Heart right ventricle (tissue), 16 donors: ENCODE measurements at regions of chr4 and their contacts with region 1.

Region 1: GRCh38 chr4:159102622-159103383 is at the start of gene RAPGEF2:
- DNase-seq: peak; percentile 90 to 95
- ATAC-seq: peak; percentile 95 to 97 (median 96)
- H3K4me3 ChIP-seq: peak within 1 kb of the TSS; percentile 66 to 99 (median 99)
- H3K27ac ChIP-seq: peak within 1 kb of the TSS; percentile 95 to 98 (median 96)
- H3K4me1 ChIP-seq: peaks cover 0 to 42% (median 32%) of the 10 kb centered on the region in 9 donors
- H3K27me3 ChIP-seq: no peaks in the 10 kb centered on the region
- CTCF ChIP-seq: peak in 2 of 9 donors; percentile 5 to 15
- total RNA-seq, gene RAPGEF2: 36.1 to 68.8 (median 54.6) TPM

Region 2: GRCh38 chr4:158778156-158778711 is 324.6 kb before region 1 on chr4:
- intact Hi-C with region 1: loop called in 1 of 10 experiments (anchors 10 kb)
- DNase-seq: no peak
- ATAC-seq: peak in 1 of 8 donors; percentile 26
- H3K4me3 ChIP-seq: no peak overlapping the region
- H3K27ac ChIP-seq: peak overlapping the region in 4 of 10 donors; percentile 7 to 23 (median 14)
- H3K4me1 ChIP-seq: peaks cover 10 to 90% (median 74%) of the 10 kb centered on the region in 9 donors
- H3K27me3 ChIP-seq: no peaks in the 10 kb centered on the region
- CTCF ChIP-seq: no peak

Region 3: DNA sequence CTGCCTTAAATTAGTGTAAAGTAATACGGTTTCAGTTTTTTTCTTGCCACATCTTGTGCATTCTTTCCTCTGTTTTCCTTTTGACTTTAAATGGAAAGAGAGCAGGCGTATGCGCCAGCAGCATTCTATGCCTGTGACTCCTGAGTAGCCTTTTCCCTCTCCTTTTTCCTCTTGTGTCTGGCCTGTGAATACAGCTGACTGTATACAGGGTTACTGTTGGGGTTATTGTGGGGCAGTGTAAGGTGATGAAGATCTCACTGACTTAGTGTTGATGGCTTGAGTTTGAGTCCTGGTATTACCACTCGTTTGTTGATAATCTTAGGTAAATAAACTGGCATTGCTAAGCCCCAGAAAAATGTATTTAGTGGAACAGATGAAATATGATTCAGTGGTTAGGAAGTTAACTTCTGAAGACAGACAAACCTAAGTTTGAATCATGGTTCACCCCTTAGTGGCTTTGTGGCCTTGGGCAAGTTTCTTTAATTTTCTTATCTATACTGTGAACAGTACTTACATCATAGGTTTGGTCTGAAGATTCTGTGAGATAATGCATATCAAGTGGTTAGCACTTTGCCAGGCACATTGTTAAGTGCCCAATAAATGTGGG is 228.9 kb before region 1 on chr4:
- intact Hi-C with region 1: loop called in 2 of 10 experiments (anchors 10 kb)
- DNase-seq: no peak
- ATAC-seq: peak in 1 of 8 donors; percentile 7
- H3K4me3 ChIP-seq: no peak overlapping the region
- H3K27ac ChIP-seq: no peak overlapping the region
- H3K4me1 ChIP-seq: peaks cover 0 to 43% (median 15%) of the 10 kb centered on the region in 9 donors
- H3K27me3 ChIP-seq: no peaks in the 10 kb centered on the region
- CTCF ChIP-seq: no peak

Region 4: DNA sequence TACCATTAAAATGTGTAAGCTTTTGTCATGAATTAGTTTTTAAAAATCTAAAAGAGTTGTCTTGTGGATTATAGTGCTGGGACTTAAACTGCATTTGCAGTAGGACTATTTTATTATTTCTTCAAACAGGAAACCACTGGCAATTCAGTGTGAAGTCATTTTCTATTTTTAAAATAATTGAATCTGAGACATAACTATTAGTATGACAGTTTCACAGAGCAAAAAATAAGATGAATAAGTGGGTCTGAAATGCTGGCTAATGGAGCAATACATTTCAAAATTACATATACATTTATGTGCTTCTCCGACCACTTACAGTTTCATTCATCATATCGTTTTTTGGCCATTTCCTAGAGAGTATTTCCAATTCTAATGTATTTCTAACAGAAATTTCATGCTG is 75.3 kb before region 1 on chr4:
- intact Hi-C with region 1: loop called in 1 of 10 experiments (anchors 2 kb)
- DNase-seq: no peak
- ATAC-seq: peak in 1 of 8 donors; percentile 41
- H3K4me3 ChIP-seq: no peak overlapping the region
- H3K27ac ChIP-seq: no peak overlapping the region
- H3K4me1 ChIP-seq: peaks cover 0 to 28% (median 11%) of the 10 kb centered on the region in 9 donors
- H3K27me3 ChIP-seq: no peaks in the 10 kb centered on the region
- CTCF ChIP-seq: no peak

Region 5: DNA sequence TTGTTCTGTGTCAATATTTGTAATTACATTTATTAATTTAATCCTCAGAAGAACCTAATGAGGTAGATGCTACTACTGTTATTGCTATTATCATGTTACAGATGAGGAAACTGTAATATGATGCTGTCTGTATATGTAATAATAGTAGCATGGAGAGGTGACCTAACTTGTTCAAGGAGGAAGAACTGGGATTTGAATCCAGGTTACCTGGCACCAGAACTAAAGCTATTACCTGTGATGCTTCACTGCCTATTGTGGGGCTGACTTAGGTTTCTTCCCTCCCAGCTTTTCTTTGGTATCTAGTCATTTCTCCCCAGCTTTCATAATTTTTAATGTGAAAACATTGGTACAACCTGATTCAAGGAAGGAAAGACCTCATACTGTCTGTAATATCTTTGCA is 43.7 kb after region 1 on chr4:
- intact Hi-C with region 1: loop called in 1 of 10 experiments (anchors 5 kb)
- DNase-seq: no peak
- ATAC-seq: no peak
- H3K4me3 ChIP-seq: no peak overlapping the region
- H3K27ac ChIP-seq: no peak overlapping the region
- H3K4me1 ChIP-seq: peaks cover 11 to 99% (median 77%) of the 10 kb centered on the region in 9 donors
- H3K27me3 ChIP-seq: no peaks in the 10 kb centered on the region
- CTCF ChIP-seq: no peak

Region 6: GRCh38 chr4:159175085-159175988 is 72.5 kb after region 1 on chr4:
- intact Hi-C with region 1: loop called in 9 of 10 experiments (anchors 1 to 10 kb)
- DNase-seq: peak; percentile 35 to 81
- ATAC-seq: peak; percentile 81 to 91 (median 87)
- H3K4me3 ChIP-seq: peak overlapping the region in 3 of 10 donors; percentile 4 to 18 (median 8)
- H3K27ac ChIP-seq: peak overlapping the region in 9 of 10 donors; percentile 11 to 81 (median 57)
- H3K4me1 ChIP-seq: peaks cover 11 to 100% (median 92%) of the 10 kb centered on the region in 9 donors
- H3K27me3 ChIP-seq: no peaks in the 10 kb centered on the region
- CTCF ChIP-seq: peak; percentile 56 to 87 (median 82)